Activated CD4-positive, alpha-beta T cell treated with anti-CD3 and anti-CD28 coated beads for 36 hours (primary cell): ENCODE measurements at regions of chr5 and their contacts with region 1.

Region 1: GRCh38 chr5:38404667-38405276 is 146.4 kb downstream of the EGFLAM start:
- DNase-seq: peak; percentile 29
- ATAC-seq: no peak
- H3K4me3 Mint-ChIP-seq: no peak overlapping the region
- H3K27ac Mint-ChIP-seq: no peak overlapping the region
- H3K4me1 Mint-ChIP-seq: no peaks in the 10 kb centered on the region
- H3K27me3 Mint-ChIP-seq: peaks cover 30% of the 10 kb centered on the region

Region 2: GRCh38 chr5:38208782-38209378 is 195.9 kb before region 1 on chr5:
- CTCF ChIA-PET with region 1: no interaction called
- POLR2A ChIA-PET with region 1: no interaction called
- intact Hi-C with region 1: loop called in 1 of 2 experiments (anchors 2 kb)
- DNase-seq: peak; percentile 40
- ATAC-seq: no peak
- H3K4me3 Mint-ChIP-seq: no peak overlapping the region
- H3K27ac Mint-ChIP-seq: no peak overlapping the region
- H3K4me1 Mint-ChIP-seq: no peaks in the 10 kb centered on the region
- H3K27me3 Mint-ChIP-seq: peaks cover 7% of the 10 kb centered on the region

Region 3: GRCh38 chr5:38468978-38469706 is 64.4 kb after region 1 on chr5:
- CTCF ChIA-PET with region 1: no interaction called
- POLR2A ChIA-PET with region 1: no interaction called
- intact Hi-C with region 1: no loop called
- DNase-seq: no peak
- ATAC-seq: no peak
- H3K4me3 Mint-ChIP-seq: no peak overlapping the region
- H3K27ac Mint-ChIP-seq: no peak overlapping the region
- H3K4me1 Mint-ChIP-seq: no peaks in the 10 kb centered on the region
- H3K27me3 Mint-ChIP-seq: peaks cover 15% of the 10 kb centered on the region